ENCODE measurements at regions of chr3 and their contacts with region 1.

Region 1: GRCh38 chr3:141561426-141562034 is 74.7 kb downstream of the RASA2 start:
- DNase-seq: no peak
- ATAC-seq: peak; percentile 75
- H3K4me3 ChIP-seq: no peak overlapping the region
- H3K27ac ChIP-seq: no peak overlapping the region
- H3K4me1 ChIP-seq: no peaks in the 10 kb centered on the region
- H3K27me3 ChIP-seq: no peaks in the 10 kb centered on the region
- CTCF ChIP-seq: peak; percentile 94

Region 2: GRCh38 chr3:141460097-141460704 is 101.3 kb before region 1 on chr3:
- intact Hi-C with region 1: loop called (anchors 5 kb)
- DNase-seq: peak; percentile 88
- ATAC-seq: peak; percentile 98
- H3K4me3 ChIP-seq: no peak overlapping the region
- H3K27ac ChIP-seq: no peak overlapping the region
- H3K4me1 ChIP-seq: no peaks in the 10 kb centered on the region
- H3K27me3 ChIP-seq: no peaks in the 10 kb centered on the region
- CTCF ChIP-seq: peak; percentile 92

Region 3: DNA sequence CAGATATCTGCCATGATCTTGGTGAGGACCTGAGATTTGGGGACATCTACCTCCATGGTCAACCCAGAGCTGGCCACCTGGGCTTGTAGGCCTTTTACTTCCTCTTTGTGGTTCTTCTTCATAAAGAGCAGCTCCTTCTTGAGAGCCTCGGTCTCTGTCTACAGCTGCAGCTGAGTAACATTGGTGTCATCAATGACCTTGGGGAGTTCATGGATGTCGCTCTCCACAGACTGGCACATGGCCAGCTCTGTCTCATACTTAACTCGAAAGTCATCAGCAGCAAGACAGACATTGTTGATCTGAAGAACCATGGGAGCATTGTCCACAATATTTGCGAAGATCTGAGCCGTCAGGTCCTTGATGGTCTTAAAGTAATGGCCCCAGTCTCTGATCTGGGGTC is 90.4 kb before region 1 on chr3:
- intact Hi-C with region 1: loop called (anchors 5 kb)
- DNase-seq: no peak
- ATAC-seq: no peak
- H3K4me3 ChIP-seq: no peak overlapping the region
- H3K27ac ChIP-seq: no peak overlapping the region
- H3K4me1 ChIP-seq: no peaks in the 10 kb centered on the region
- H3K27me3 ChIP-seq: no peaks in the 10 kb centered on the region
- CTCF ChIP-seq: no peak

Measured in upper lobe of right lung (tissue), 1 donor.